Right cardiac atrium (tissue), 5 donors: ENCODE measurements at regions of chr2 and their contacts with region 1.

Region 1: GRCh38 chr2:3527886-3528785 is 8.8 kb upstream of the ADI1 start:
- DNase-seq: no peak
- ATAC-seq: no peak
- H3K4me3 ChIP-seq: no peak overlapping the region
- H3K27ac ChIP-seq: no peak overlapping the region
- H3K4me1 ChIP-seq: peaks cover 2% of the 10 kb centered on the region
- H3K27me3 ChIP-seq: no peaks in the 10 kb centered on the region

Region 2: GRCh38 chr2:3470166-3470651 is 57.9 kb before region 1 on chr2:
- intact Hi-C with region 1: loop called in 1 of 4 experiments (anchors 5 kb)
- DNase-seq: peak; percentile 92 to 95 (median 94)
- ATAC-seq: peak; percentile 90 to 91
- H3K4me3 ChIP-seq: no peak overlapping the region
- H3K27ac ChIP-seq: peak overlapping the region; percentile 92
- H3K4me1 ChIP-seq: peaks cover 17% of the 10 kb centered on the region
- H3K27me3 ChIP-seq: no peaks in the 10 kb centered on the region

Region 3: GRCh38 chr2:3563521-3563976 is 35.4 kb after region 1 on chr2:
- intact Hi-C with region 1: no loop called
- DNase-seq: no peak
- ATAC-seq: no peak
- H3K4me3 ChIP-seq: no peak overlapping the region
- H3K27ac ChIP-seq: no peak overlapping the region
- H3K4me1 ChIP-seq: no peaks in the 10 kb centered on the region
- H3K27me3 ChIP-seq: no peaks in the 10 kb centered on the region